GM10248 (cell line): ENCODE measurements at regions of chr9 and their contacts with region 1.

Region 1: DNA sequence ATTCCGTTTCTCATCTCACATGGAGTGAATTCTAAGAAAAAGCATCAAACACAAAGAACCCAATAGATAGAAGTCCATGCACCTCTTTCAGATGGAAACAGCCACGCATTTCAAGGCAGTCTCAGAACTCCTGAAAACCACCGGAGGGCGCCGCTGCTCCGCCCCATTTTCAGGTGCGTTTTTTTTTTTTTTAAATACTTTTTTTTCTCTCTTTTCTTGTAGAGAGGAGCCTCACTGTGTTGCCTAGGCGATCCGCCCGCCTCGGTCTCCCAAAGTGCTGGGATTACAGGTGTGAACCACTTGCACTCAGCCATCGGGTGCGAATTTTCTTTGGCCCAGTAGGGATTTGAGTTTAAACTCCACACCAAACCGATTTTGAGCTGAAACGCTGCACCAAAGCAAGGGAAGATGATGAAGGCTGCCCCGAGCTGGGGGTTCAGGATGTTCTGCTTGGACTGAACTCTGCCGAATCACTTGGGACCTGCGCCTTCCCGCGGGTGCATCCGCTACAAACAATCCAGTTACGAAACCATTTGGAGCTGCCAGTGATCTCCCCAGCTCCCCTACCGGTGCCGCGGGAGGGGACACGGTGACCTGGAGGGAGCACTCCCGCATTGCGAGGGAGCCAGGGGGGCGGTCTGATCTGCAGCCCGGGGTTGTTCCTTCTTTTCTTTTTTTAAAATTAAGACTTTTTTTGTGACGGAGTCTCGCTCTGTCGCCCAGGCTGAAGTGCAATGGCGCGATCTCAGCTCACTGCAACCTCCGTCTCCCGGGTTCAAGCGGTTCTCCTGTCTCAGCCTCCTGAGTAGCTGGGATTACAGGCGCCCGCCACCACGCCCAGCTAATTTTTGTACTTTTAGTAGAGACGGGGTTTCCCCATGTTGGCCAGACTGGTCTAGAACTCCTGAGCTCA is 1.4 kb downstream of the PTGR1 start:
- DNase-seq: peak; percentile 68
- CTCF ChIP-seq: peak; percentile 55

Region 2: DNA sequence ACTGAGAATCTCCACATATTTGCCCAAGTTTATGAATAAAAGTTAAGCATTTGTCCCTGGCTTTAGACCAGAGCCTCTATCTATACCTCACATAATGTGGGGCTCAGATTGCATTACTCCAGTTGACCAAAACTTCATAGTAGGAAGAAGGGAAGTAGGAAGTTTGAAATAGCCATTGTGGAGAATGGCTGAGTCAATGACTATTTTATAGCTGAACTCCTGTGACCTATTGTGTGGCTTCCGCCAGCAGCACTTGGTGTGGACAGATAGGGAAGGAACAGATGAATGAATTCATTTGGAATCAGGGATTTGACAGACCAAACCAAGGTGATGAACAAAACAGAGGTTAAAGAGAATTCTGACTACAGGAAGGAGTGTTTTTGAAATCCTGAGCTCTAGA is 466.9 kb before region 1 on chr9:
- CTCF ChIA-PET with region 1: no interaction called
- POLR2A ChIA-PET with region 1: interaction called, 17 read pairs
- DNase-seq: no peak
- CTCF ChIP-seq: no peak

Region 3: DNA sequence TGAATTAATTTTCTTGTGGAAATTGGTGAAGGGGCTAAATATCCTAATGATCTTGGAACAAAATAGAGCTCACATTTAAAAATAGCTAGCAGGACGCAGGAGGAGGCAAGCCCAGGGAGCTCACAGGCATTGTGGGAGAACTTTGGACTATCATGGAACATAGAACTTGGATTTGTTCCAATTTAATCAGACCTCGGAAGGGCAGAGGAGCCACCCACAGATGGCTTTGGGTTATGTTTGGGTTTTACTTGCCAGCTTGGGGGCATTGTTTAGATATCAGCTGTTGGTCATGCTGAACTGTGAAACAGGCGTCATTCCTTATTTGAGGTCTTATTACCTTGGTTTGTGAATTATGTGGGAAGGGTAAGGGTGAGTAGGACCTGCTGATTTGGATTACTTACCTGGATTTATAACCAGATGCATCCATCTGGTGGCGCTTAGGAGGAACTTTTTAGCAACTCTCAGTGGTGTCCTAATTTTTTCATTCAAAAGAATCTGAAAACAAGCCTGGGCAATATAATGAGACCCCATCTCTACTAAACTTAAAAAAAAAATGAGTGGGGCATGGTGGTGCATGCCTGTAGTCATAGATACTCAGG is 15.5 kb after region 1 on chr9:
- CTCF ChIA-PET with region 1: interaction called, 23 read pairs
- POLR2A ChIA-PET with region 1: no interaction called
- DNase-seq: no peak
- CTCF ChIP-seq: no peak

Region 4: GRCh38 chr9:111621895-111622480 is 23.9 kb after region 1 on chr9:
- CTCF ChIA-PET with region 1: interaction called, 42 read pairs
- POLR2A ChIA-PET with region 1: no interaction called
- DNase-seq: peak; percentile 47
- CTCF ChIP-seq: peak; percentile 79

Region 5: DNA sequence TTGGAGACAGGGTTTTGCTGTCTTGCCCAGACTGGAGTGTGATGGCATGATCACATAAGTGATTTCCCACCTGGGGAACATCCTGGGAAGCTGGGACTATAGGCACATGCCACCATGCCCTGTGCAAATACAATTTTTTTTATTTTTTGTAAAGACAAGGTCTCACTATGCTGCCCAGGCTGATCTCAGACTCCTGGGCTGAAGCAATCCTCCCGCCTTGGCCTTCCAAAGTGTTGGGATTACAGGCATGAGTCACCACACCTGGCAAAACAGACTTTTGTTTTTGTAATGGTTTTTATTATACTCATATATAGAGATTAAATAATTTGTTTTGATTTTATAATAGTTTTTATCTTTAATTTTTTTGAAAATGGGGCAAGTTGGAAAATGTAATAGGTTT is 47.7 kb after region 1 on chr9:
- CTCF ChIA-PET with region 1: no interaction called
- POLR2A ChIA-PET with region 1: no interaction called
- DNase-seq: no peak
- CTCF ChIP-seq: no peak